ENCODE measurements at regions of chr1 and their contacts with region 1.

Region 1: DNA sequence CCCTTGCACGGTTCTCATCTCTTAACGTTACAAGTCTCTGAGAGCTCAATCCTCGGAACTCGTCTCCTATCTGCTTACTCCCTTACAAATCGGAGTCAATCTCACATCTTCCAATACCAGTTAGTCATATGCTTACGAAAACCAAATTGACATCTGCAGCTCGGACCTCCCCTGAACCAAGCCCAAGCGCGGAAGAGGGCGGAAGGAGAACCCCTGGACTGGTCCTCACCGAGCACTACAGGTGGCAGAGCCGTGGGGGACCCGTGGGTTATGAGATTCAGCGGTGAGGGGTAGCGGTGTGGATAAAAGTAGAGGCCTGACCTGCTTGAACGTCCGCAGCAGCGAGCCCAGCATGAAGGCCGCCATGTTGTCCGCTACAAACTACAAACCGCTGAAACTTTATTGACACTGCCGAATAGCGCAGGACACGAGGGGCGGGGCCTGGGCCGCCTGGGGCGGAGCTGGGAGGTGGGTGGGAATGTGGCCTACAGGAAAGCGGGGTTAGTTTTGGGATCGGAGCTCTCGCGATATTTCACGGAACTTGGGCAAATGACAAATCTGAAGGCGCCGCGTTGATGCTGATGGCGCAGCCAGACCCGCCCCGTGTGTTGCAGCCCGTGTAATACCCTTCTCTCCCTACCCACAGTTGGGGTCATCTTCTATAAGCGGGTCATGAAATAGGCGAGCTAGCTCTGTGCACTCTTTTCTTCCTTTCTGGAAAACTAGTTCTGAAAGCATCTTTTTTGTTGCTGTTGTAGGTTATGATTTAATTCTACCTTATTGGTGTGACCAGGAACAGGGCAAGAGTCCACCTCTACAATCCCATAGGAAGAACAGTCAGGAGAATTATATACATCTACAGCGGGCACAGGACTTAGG is at the start of gene MRPS14:
- DNase-seq: peak; percentile 95 to 99
- ATAC-seq: peak; percentile 96 to 98
- H3K4me3 ChIP-seq: peak within 1 kb of the TSS; percentile 65
- H3K27ac ChIP-seq: peak within 1 kb of the TSS; percentile 79 to 90
- H3K4me1 ChIP-seq: peaks cover 8% of the 10 kb centered on the region; the same call in 1 of the 3 replicates
- CTCF ChIP-seq: no peak
- EP300 ChIP-seq: no peak
- POLR2A ChIP-seq: peak; percentile 70
- RAD21 ChIP-seq: no peak
- polyA plus RNA-seq, gene MRPS14: 40.9 and 45.1 TPM in 2 replicates

Region 2: GRCh38 chr1:175050992-175051391 is 27.7 kb after region 1 on chr1:
- CTCF ChIA-PET with region 1: no interaction called
- POLR2A ChIA-PET with region 1: no interaction called
- DNase-seq: no peak
- ATAC-seq: no peak
- H3K4me3 ChIP-seq: no peak overlapping the region
- H3K27ac ChIP-seq: no peak overlapping the region
- H3K4me1 ChIP-seq: no peaks in the 10 kb centered on the region
- CTCF ChIP-seq: no peak
- EP300 ChIP-seq: no peak
- POLR2A ChIP-seq: no peak
- RAD21 ChIP-seq: no peak

Region 3: GRCh38 chr1:175124861-175125260 is 101.6 kb after region 1 on chr1:
- CTCF ChIA-PET with region 1: interaction called, 10 read pairs
- POLR2A ChIA-PET with region 1: interaction called, 5 read pairs
- DNase-seq: no peak
- ATAC-seq: no peak
- H3K4me3 ChIP-seq: no peak overlapping the region
- H3K27ac ChIP-seq: no peak overlapping the region
- H3K4me1 ChIP-seq: no peaks in the 10 kb centered on the region
- CTCF ChIP-seq: no peak
- EP300 ChIP-seq: no peak
- POLR2A ChIP-seq: no peak
- RAD21 ChIP-seq: no peak

Region 4: DNA sequence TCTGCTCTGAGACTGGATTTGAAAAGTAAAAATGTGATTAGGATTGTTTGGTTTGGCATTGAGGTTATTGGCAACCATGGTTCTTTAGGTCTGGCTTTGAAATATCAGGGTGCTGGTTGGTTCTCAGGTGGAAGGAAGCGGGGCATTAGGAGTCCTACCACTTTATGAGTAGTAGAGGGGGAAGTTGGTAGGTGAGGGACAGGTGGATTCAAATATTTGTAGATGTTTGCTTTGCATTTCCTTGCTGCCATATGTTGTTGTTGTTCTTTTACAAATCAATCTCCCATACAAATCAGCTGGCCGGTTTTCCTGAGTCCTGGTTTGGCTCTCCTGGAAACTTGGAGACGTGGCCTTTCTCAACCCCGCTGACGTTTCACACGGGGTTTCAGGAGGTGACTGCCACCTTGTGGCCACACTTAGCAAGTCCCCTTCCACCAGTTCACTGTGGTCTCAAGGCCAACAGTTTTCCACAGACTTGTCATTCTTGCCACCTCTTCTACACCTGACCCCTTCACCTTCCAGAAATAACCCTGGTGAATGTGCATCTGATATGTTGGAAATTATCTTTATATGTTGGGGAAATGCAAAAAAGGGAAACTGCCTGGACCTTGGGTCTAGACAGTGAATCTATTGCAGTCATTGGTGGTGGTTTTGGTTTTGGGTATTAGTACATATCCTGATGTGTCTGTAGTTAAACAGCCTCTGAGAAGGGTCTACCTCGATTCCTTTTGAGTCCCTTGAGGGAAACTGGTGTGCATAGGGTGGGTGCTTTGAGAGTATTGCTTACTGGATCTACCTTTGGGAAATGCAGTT is 296.3 kb after region 1 on chr1:
- CTCF ChIA-PET with region 1: interaction called, 21 read pairs
- POLR2A ChIA-PET with region 1: no interaction called
- DNase-seq: peak; percentile 59 to 71
- ATAC-seq: peak; percentile 89 to 98
- H3K4me3 ChIP-seq: no peak overlapping the region
- H3K27ac ChIP-seq: no peak overlapping the region
- H3K4me1 ChIP-seq: no peaks in the 10 kb centered on the region
- CTCF ChIP-seq: peak; percentile 75
- EP300 ChIP-seq: no peak
- POLR2A ChIP-seq: no peak
- RAD21 ChIP-seq: peak; percentile 66 to 76